SK-MEL-5 (cell line): ENCODE measurements at regions of chr3 and their contacts with region 1.

Region 1: DNA sequence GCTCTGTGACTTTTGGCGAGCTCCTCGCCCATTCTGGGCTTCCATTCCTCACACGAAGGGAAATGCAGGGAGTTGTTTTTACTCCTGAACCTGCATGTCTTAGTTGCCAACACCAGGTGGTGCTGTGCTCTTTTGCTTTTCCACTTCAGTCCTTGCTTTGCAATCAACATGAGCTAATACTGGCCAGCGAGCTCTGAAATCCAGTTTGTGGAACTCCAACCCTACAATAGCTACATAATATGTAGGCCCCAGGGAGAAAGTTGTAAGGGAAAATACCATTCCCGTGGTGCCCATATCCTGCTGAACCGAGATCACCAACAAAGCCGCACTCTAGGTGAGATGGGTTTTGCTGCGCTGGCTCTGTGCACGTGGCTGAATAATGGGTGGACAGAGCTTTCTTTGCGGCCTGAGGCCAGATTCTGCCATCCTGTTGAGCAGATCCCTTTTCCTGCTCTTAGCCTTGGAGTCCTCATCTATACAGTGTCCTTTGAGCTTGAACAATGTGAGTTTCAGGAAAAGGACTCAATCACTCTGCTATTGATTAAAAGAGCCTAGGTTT is 25.0 kb downstream of the LSM3 start:
- DNase-seq: peak; percentile 87

Region 2: GRCh38 chr3:13839726-13840320 is 363.8 kb before region 1 on chr3:
- in situ Hi-C with region 1: no loop called
- DNase-seq: no peak

Region 3: DNA sequence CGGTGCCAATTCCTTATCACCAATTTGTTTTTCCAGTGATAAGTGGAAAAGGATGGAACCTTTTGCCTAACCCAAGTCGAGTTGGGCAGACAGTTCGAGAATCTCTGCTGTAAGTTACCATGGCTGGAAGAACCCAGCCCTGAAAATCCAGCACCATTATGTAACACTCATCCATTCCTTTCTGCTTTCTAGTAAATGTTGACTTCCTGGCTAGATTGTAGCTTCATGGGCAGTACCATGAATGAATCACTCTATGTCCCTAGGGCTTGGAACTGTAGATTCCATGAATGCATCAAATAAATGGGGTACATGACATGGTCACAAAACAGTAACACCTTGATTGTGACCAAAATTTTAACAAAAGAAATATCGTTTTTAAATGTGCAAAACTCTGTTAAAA is 92.9 kb before region 1 on chr3:
- in situ Hi-C with region 1: no loop called
- DNase-seq: no peak

Region 4: GRCh38 chr3:14461748-14462324 is 258.2 kb after region 1 on chr3:
- in situ Hi-C with region 1: loop called (anchors 25 kb)
- DNase-seq: peak; percentile 65